Left ventricle myocardium inferior (tissue), 1 donor: ENCODE measurements at regions of chr3 and their contacts with region 1.

Region 1: DNA sequence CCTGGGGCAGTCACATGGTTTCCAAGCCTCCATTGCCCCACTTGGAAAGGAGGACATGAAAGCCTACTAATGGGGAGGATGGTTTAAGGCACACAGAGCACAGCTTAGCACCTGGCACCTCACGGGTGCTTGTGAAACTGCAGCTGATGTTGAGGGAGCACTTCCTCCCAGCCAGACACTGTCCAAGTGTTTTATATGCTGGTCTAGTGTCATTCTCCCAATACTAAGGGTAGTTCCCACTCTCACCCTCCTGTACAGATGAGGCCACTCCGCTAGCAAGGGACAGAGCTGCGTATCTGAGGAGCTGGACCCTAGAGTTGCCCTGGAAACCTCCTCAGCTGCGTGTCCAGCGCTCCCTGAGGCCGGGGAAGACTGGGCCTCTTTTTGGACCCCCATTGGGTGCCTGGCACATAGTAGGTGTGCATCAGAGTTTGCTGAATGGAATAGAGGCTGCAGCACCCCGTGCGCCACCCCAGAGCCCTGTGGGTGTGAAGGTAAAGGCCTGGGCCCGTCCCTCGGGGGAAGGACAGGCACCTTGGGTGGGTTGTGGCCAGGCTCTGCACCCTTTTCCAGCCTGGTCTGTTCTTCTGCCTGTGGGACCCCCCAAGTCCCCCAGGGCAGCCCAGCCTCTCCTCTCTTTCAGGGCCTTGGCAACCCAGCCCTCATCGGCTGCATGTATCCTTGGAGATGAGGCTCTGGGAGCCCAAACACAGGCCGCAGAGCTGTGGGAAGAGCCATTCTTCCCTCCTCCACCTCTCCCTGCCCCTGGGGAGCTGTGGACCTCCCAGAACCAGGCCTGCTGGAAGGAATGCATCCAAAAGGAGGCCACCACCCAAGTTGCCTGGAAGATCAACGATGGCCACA is 31.3 kb downstream of the DNASE1L3 start:
- DNase-seq: no peak
- H3K4me3 ChIP-seq: no peak overlapping the region
- H3K27ac ChIP-seq: no peak overlapping the region
- H3K4me1 ChIP-seq: peaks cover 38% of the 10 kb centered on the region
- H3K27me3 ChIP-seq: no peaks in the 10 kb centered on the region
- CTCF ChIP-seq: no peak

Region 2: GRCh38 chr3:58299839-58300516 is 120.5 kb after region 1 on chr3:
- intact Hi-C with region 1: loop called (anchors 5 kb)
- DNase-seq: no peak
- H3K4me3 ChIP-seq: no peak overlapping the region
- H3K27ac ChIP-seq: no peak overlapping the region
- H3K4me1 ChIP-seq: peaks cover 25% of the 10 kb centered on the region
- H3K27me3 ChIP-seq: no peaks in the 10 kb centered on the region
- CTCF ChIP-seq: peak; percentile 72